ENCODE measurements at regions of chr1 and their contacts with region 1.

Region 1: DNA sequence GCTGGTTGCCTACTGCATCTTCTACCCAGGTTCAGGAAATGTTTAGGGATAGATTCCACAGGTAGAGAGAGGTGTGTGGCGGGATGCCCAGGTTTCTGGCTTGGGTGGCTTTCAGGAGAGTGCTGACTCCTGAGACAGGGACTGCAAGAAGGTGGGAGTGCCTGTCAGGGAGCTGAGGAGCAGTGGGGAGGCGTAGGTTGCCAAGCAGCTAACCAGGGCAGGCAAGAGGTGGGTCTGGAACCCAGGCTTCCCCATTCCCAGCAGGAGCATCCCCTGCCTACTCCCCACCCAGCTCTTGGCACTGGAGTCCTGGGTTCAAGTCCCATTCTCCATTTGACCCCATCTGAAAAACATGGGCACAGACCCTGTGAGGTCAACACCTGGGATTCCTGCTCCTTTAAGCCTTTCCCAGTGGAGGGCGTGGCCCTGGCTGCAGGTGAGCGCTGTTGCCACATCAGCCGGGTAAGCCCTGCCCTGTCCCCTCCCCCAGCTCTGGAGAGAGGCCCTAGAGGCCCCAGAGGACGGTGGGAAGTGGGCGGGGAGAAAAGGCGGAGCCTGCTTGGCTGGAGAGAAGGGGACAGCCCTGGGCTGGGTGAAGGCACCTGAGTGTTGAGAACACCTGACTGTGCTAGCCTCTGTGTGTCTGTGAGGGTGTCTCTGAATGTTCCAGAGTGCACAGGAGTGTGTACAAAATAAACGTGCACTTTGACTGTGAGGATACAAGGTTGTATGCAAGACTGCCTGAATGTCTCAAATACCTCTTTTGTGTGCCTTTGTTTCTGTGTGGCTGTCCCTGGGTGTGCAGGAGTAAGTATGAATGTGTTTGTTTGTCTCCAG is 14.0 kb upstream of the SYNC start:
- DNase-seq: peak; percentile 80
- H3K4me3 Mint-ChIP-seq: no peak overlapping the region
- H3K27ac Mint-ChIP-seq: no peak overlapping the region
- H3K4me1 Mint-ChIP-seq: peaks cover 14% of the 10 kb centered on the region
- H3K27me3 Mint-ChIP-seq: peaks cover 67% of the 10 kb centered on the region

Region 2: GRCh38 chr1:32521165-32521564 is 195.4 kb before region 1 on chr1:
- CTCF ChIA-PET with region 1: interaction called, 10 read pairs
- DNase-seq: no peak
- H3K4me3 Mint-ChIP-seq: peak overlapping the region; percentile 56
- H3K27ac Mint-ChIP-seq: no peak overlapping the region
- H3K4me1 Mint-ChIP-seq: peaks cover 6% of the 10 kb centered on the region
- H3K27me3 Mint-ChIP-seq: peaks cover 10% of the 10 kb centered on the region

Region 3: DNA sequence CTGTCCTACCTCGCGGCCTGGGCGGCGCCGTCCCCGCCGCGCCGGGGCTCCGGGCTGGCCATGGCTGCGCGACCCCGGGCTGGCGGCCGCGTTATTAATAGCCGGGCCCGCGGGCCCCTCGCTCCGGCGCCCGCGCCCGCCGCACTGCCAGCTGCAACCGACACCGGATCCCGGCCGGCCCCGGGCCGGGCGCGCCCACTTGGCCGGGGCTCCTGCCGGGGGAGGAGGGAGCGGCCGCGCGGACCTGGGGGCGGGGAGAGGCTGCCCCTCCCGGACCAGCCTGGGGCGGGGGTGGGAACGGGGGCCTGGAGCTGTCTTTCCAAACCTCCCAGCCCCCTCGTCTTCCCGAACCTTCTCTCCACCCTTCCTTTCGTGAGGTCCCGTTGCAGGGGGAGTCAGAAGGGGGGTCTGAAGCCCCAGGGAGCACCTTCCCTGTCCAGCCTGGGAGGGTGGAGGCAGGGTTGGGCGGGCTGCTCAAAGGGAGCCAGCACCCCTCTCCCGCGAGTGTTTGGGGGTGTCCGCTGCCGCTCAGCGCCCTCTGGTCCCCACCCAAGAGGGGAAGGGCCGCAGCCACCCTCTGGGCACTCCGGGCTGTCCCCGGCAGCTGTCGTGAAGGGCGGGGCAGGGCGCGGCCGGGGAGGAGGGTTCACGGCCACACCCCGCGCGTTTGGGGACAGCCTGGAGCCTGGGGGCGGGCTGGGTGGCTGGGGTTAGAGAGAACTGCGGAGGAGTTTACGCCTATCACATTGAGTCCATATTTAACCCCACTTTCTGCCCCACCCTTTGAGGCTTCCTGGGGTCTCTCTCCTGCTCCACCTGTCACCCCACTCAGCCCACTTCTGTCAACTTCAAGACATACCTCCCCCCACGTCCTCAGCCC is 13.7 kb before region 1 on chr1 and contains the start of gene SYNC:
- CTCF ChIA-PET with region 1: interaction called, 13 read pairs
- DNase-seq: peak; percentile 47
- H3K4me3 Mint-ChIP-seq: peak within 1 kb of the TSS; percentile 3
- H3K27ac Mint-ChIP-seq: no peak within 1 kb of the TSS
- H3K4me1 Mint-ChIP-seq: peaks cover 10% of the 10 kb centered on the region
- H3K27me3 Mint-ChIP-seq: peaks cover 88% of the 10 kb centered on the region

Region 4: GRCh38 chr1:32729254-32730046 is 12.9 kb after region 1 on chr1:
- CTCF ChIA-PET with region 1: interaction called, 23 read pairs
- DNase-seq: no peak
- H3K4me3 Mint-ChIP-seq: no peak overlapping the region
- H3K27ac Mint-ChIP-seq: no peak overlapping the region
- H3K4me1 Mint-ChIP-seq: peaks cover 29% of the 10 kb centered on the region
- H3K27me3 Mint-ChIP-seq: peaks cover 33% of the 10 kb centered on the region

Region 5: DNA sequence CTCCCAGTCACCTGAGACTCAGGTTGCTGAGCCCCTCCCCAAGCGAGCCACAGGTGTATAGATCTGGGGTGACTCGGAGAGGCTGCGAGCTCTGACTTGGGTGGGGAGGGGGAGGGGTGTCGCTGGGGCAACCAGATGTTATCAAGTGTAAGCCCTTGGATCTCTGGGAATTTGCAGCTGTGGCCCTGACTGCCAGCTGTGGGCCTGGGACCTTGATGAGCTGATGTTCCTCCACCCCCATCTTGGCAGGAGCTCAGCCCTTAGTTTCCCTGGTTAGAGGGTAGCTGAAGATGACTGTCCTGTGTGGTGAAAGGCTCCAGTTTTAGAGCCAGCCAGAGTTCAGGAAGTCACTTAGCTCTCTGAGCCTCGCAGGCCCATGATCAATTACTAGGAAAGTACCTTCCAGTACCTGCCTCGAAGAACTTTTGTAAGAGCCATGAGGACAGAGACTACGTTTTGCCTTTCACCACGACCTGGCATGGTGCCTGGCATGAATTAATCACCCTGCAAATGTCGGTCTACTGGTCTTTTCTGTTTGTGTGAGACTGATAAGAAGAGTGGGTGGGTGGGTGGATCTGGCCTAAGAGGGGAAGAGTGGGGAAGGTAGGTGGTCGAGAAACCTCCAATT is 44.8 kb after region 1 on chr1:
- CTCF ChIA-PET with region 1: interaction called, 14 read pairs
- DNase-seq: no peak
- H3K4me3 Mint-ChIP-seq: no peak overlapping the region
- H3K27ac Mint-ChIP-seq: no peak overlapping the region
- H3K4me1 Mint-ChIP-seq: peaks cover 34% of the 10 kb centered on the region
- H3K27me3 Mint-ChIP-seq: peaks cover 25% of the 10 kb centered on the region

Region 6: DNA sequence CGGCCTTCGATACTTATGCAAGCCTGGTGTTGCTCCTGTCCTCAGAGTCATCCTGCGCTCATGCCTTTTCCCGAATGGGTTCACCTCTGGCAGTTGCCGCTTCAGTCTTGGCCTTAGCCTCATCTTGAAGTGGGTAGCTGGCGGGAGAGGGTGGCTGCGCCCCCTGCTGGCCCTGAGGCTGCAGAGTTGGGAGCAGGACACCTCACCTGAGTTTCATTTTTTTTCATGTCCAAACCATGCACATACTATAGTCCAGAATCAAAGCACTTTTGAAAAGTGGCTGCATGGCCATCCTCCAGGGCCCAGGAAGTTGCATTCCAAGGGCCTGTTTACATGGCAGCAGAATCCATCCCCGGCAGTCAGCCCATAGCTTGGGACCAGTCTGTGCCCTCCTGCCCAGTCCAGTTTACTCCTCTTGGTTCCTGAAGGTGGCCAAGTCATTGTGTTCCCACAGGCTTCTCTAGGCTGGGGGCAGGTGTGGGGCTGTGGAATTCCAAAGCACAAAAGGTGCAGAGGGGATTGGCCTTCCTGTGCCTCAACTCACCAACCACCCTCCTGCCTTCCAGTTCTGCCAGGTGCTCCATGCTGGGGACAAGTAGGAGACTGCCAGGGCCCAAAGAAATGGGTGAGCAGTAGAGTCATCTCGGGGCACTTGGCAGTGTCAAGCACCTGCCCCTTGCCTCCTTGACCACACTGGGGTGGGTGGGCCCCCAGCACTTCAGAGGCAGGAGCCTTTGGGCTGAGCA is 56.7 kb after region 1 on chr1:
- CTCF ChIA-PET with region 1: interaction called, 204 read pairs
- DNase-seq: peak; percentile 85
- H3K4me3 Mint-ChIP-seq: no peak overlapping the region
- H3K27ac Mint-ChIP-seq: no peak overlapping the region
- H3K4me1 Mint-ChIP-seq: peaks cover 7% of the 10 kb centered on the region
- H3K27me3 Mint-ChIP-seq: no peaks in the 10 kb centered on the region

Region 7: GRCh38 chr1:32848354-32849063 is 132.0 kb after region 1 on chr1:
- CTCF ChIA-PET with region 1: no interaction called
- DNase-seq: no peak
- H3K4me3 Mint-ChIP-seq: no peak overlapping the region
- H3K27ac Mint-ChIP-seq: no peak overlapping the region
- H3K4me1 Mint-ChIP-seq: no peaks in the 10 kb centered on the region
- H3K27me3 Mint-ChIP-seq: no peaks in the 10 kb centered on the region

Region 8: DNA sequence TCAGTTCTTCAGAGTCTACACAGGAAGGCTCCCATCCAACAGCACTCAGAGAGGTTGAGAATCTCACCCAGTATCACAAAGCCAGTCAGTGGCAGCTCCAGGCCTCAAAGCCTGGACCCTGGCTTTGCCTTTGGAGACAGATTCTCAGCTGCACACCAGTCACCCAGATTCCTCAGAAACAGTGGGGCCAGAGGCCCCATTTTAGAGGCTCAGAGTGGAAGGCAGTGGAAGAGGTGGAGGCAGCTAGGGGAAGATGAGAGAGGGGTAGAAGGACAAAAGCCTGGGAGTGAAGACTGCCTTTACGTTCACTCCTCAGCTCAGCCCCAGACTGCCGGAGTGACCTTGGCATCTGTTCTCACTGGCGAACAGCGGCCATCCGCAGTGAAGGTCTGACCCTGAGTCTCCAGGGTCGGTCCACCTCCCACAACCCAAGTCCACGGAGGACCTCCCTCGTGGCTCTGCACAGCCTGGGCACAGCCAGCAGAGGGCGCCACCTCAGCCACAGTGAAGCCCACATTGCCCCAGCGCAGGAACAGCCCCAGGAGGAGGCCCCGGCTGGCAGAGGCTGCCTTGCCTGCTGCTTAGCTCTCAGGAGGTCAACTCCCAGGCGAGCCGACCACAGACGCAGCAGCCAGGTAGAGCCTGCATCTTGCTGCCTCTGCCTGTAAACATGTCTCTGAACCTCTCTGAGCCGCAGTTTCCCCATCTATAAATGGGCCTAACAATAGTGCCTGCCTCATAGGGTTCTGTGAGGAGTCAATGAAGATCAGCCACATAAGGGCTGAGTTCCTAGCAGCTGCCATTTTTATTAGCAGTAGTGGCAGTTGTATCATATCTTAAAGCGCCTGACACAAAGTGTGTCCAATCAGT is 160.0 kb after region 1 on chr1:
- CTCF ChIA-PET with region 1: interaction called, 66 read pairs
- DNase-seq: peak; percentile 80
- H3K4me3 Mint-ChIP-seq: no peak overlapping the region
- H3K27ac Mint-ChIP-seq: no peak overlapping the region
- H3K4me1 Mint-ChIP-seq: peaks cover 2% of the 10 kb centered on the region
- H3K27me3 Mint-ChIP-seq: peaks cover 79% of the 10 kb centered on the region

Measured in activated naive CD4-positive, alpha-beta T cell treated with anti-CD3 and anti-CD28 coated beads, Interleukin-2, amount 10 ng/mL, durations not matched to agents 7 days and 5 days (primary cell).